A673 (cell line): ENCODE measurements at regions of chr9 and their contacts with region 1.

Region 1: DNA sequence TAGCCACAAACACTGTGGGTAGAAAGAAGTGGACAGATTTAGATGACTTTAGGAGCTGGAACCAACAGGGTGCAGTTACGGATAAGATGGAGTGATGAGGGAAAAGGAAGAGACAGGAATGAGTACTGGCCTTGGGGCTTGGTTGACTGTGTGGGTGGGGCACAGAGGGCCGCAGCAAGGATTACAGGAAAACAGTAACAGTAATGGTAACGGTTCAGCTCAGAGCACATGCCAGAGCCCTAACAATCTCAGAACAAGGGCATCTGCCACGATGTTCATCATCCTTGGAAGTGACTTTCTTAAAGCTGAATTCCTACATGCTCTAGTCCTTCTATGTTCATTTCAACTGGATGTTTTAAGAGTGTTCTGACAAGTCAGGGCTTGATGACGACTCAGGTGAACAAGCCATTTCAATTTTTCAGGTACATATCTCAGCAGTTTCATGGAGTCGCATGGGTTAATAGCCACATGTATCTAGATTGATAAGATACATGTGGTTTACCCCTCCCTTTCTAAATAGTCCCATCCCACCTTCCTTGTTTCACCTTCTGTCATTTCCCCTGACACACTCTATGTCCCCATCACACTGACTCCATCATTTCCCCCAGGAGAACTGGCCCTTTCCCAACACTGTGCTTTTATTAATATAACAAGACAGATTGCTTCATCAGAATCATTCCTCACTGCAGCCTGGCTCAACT is 65.0 kb downstream of the CEMIP2 start:
- DNase-seq: no peak
- H3K4me3 ChIP-seq: no peak overlapping the region
- H3K27ac ChIP-seq: no peak overlapping the region
- H3K4me1 ChIP-seq: no peaks in the 10 kb centered on the region
- H3K27me3 ChIP-seq: no peaks in the 10 kb centered on the region
- CTCF ChIP-seq: no peak

Region 2: GRCh38 chr9:71716138-71716909 is 13.0 kb after region 1 on chr9:
- CTCF ChIA-PET with region 1: no interaction called
- POLR2A ChIA-PET with region 1: no interaction called
- intact Hi-C with region 1: no loop called
- DNase-seq: peak; percentile 10
- H3K4me3 ChIP-seq: no peak overlapping the region
- H3K27ac ChIP-seq: no peak overlapping the region
- H3K4me1 ChIP-seq: no peaks in the 10 kb centered on the region
- H3K27me3 ChIP-seq: no peaks in the 10 kb centered on the region
- CTCF ChIP-seq: peak; percentile 64

Region 3: GRCh38 chr9:71744754-71745521 is 41.6 kb after region 1 on chr9:
- CTCF ChIA-PET with region 1: no interaction called
- POLR2A ChIA-PET with region 1: interaction called, 12 read pairs
- intact Hi-C with region 1: no loop called
- DNase-seq: no peak
- H3K4me3 ChIP-seq: no peak overlapping the region
- H3K27ac ChIP-seq: no peak overlapping the region
- H3K4me1 ChIP-seq: no peaks in the 10 kb centered on the region
- H3K27me3 ChIP-seq: no peaks in the 10 kb centered on the region
- CTCF ChIP-seq: no peak